ENCODE measurements at regions of chr10 and their contacts with region 1.

Region 1: DNA sequence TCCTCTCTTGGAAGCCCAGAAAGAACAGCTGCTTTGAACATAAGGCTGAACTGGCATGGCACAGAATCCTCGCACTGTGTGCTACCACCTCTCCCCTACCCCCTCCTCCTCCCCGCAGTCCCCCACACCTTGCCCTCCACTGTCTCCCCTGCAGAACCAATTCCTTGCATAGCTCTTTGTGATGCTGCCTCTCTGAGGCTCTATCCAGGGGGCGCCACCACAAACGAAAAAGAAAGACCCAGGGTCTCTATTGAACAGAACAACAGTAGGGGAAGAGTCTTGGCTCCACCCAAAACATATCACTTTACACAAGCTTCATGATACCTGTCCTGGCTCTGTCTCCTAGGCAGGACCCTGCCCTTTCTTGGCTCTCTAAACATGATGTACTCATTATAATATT is 26.2 kb upstream of the EBLN1 start:
- DNase-seq: no peak
- H3K4me3 ChIP-seq: no peak overlapping the region
- H3K27ac ChIP-seq: no peak overlapping the region
- H3K4me1 ChIP-seq: no peaks in the 10 kb centered on the region
- H3K27me3 ChIP-seq: no peaks in the 10 kb centered on the region
- CTCF ChIP-seq: no peak
- POLR2A ChIP-seq: no peak

Region 2: GRCh38 chr10:22228943-22229801 is 14.8 kb before region 1 on chr10:
- intact Hi-C with region 1: loop called (anchors 1 kb)
- DNase-seq: peak; percentile 83 to 86
- H3K4me3 ChIP-seq: peak overlapping the region; percentile 70 to 76 (median 72)
- H3K27ac ChIP-seq: peak overlapping the region; percentile 90 to 95
- H3K4me1 ChIP-seq: no peaks in the 10 kb centered on the region
- H3K27me3 ChIP-seq: no peaks in the 10 kb centered on the region
- CTCF ChIP-seq: no peak
- POLR2A ChIP-seq: no peak